Activated CD8-positive, alpha-beta T cell treated with anti-CD3 and anti-CD28 coated beads for 36 hours (primary cell): ENCODE measurements at regions of chr6 and their contacts with region 1.

Region 1: DNA sequence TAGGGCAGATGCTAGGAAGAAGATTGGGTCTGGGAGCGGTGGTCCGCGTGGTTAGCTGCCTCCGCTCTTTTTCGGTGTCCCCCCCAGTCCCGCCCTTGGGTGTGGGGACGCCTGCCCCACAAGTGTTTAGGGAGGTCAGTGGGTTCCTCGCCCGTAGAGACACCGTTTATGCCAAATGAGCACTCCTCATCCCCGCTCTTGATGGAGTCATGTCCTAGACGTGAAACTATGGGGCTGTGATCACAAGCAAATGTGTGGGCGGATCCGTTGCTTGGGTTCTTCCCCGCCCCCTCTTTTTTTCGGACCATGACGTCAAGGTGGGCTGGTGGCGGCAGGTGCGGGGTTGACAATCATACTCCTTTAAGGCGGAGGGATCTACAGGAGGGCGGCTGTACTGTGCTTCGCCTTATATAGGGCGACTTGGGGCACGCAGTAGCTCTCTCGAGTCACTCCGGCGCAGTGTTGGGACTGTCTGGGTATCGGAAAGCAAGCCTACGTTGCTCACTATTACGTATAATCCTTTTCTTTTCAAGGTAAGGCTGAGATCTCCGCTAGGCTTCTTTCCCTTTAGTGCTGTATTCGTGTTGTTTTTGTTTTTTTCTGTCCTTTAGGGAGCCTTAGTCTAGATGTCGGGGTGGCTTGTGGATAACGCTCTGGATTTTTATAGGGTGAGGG is at the start of gene HSP90AB1:
- DNase-seq: peak; percentile 99
- ATAC-seq: peak; percentile 85
- H3K4me3 Mint-ChIP-seq: peak within 1 kb of the TSS; percentile 100
- H3K27ac Mint-ChIP-seq: peak within 1 kb of the TSS; percentile 100
- H3K4me1 Mint-ChIP-seq: peaks cover 39% of the 10 kb centered on the region
- H3K27me3 Mint-ChIP-seq: peaks cover 3% of the 10 kb centered on the region
- CTCF ChIP-seq: no peak
- total RNA-seq, gene HSP90AB1: 2,124 to 2,130 TPM

Region 2: DNA sequence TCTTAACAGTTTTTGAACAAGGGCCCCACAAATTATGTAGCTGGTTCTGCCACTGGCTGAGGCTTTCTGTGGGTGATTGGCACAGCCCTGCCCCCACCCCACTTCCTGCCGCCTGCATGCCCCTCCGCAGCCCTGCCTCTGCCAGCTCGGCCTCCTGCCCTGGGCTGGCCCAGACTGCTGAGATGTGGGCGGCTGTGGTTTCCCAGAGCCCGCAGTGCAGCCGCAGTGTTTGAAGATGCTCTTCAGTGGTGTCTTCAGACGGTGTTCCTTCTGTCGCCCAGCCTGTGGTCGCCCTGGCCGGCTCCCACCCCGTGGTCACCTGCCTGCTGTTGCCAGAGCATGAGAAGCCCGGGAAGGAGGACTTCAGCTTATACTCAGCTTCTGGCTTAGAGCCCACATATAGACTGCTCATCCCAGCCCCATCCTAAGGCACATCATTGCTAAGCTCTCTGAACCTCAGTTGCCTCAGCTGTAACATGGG is 322.5 kb before region 1 on chr6:
- CTCF ChIA-PET with region 1: no interaction called
- POLR2A ChIA-PET with region 1: no interaction called
- intact Hi-C with region 1: no loop called
- DNase-seq: peak; percentile 84
- ATAC-seq: peak; percentile 90
- H3K4me3 Mint-ChIP-seq: no peak overlapping the region
- H3K27ac Mint-ChIP-seq: peak overlapping the region; percentile 25
- H3K4me1 Mint-ChIP-seq: peaks cover 40% of the 10 kb centered on the region
- H3K27me3 Mint-ChIP-seq: no peaks in the 10 kb centered on the region
- CTCF ChIP-seq: no peak

Region 3: DNA sequence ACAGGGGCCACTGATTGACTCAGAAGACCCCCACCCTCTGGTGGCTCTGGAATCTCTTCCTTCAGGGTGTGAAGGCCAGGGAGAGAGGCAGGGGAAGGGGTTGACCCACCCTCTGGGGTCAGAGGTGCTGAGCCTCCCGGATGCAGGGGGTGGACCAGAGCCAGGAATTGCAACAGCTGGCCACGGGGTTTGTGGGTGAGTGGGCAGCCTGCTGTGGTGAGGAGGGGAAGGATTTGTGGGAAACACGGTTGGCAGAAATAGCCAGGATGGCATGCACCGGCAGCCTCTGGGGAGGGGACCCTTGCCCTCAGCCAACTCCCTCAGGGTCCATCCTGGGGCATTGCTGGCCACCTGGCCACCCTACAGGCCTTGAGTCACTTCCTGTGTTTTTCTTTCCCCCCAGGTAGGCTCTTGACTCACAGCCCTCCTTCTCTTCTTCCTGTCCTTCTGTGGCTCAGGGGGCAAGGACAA is 212.4 kb before region 1 on chr6:
- CTCF ChIA-PET with region 1: no interaction called
- POLR2A ChIA-PET with region 1: no interaction called
- intact Hi-C with region 1: no loop called
- DNase-seq: no peak
- ATAC-seq: no peak
- H3K4me3 Mint-ChIP-seq: no peak overlapping the region
- H3K27ac Mint-ChIP-seq: no peak overlapping the region
- H3K4me1 Mint-ChIP-seq: no peaks in the 10 kb centered on the region
- H3K27me3 Mint-ChIP-seq: peaks cover 8% of the 10 kb centered on the region
- CTCF ChIP-seq: no peak

Region 4: DNA sequence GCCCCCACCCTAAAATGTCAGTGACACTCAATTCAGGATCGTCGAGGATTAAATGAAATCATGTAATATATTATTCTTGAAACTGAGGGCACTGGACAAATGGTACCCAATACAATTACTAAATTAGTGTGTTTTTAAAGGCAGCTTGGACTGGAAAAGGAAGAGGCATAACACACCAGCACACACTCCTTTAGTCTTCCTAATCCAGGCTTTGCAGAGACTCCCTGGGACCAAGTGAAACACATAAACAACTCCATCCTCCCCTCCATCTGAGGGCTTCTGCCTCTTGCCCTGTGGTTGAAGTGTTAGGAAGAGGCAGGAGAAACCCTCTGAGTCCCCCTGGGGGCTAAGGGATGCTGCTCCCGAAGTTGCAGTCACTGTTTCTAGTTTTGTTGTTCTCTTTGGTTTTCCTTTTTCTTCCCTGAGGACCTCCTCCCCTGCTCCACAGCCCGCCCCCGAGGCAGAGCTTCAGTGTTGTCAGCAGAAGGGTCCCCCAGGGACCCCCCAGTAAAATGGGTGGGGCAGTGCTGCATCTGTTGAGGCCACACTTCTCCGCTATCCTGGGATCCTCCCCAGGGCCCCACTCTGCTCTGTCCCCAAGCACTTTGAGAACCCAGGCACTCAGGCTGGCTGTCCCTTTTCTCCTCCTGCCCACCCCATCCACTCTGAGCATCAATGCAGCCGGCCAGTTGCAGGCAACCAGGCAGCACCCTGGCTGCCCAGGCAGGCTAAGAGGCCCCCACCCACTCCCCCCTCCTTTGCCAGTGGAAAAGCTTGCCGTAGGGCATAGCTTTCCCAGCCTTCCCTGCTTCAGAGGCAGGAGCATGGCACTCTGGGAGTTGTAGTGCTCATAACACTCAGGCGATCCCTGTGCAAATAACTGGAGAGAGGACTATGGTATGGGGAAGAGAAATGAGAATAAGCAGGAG is 113.5 kb before region 1 on chr6:
- CTCF ChIA-PET with region 1: no interaction called
- POLR2A ChIA-PET with region 1: interaction called, 13 read pairs
- intact Hi-C with region 1: no loop called
- DNase-seq: no peak
- ATAC-seq: no peak
- H3K4me3 Mint-ChIP-seq: no peak overlapping the region
- H3K27ac Mint-ChIP-seq: no peak overlapping the region
- H3K4me1 Mint-ChIP-seq: peaks cover 5% of the 10 kb centered on the region
- H3K27me3 Mint-ChIP-seq: no peaks in the 10 kb centered on the region
- CTCF ChIP-seq: no peak

Region 5: DNA sequence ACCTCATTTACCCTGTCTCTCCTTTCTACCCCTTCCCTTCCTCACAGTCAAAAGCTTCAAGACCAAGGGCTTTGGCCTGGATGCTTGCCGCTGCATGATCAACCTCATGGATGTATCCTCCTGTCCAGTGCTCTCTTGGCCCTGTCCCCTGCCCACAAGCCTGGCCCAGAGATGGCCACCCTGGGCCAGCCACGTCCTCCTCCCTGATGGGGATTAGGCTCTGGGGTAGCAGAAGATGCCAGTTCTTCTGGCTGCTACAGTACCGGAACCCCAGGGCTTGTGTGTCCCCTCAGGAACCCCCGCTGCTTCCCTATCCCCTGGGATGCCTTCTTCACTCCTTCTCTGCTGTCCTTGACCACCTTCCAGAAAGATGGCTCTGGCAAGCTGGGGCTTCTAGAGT is 65.9 kb before region 1 on chr6:
- CTCF ChIA-PET with region 1: no interaction called
- POLR2A ChIA-PET with region 1: interaction called, 17 read pairs
- intact Hi-C with region 1: no loop called
- DNase-seq: no peak
- ATAC-seq: no peak
- H3K4me3 Mint-ChIP-seq: no peak overlapping the region
- H3K27ac Mint-ChIP-seq: no peak overlapping the region
- H3K4me1 Mint-ChIP-seq: peaks cover 17% of the 10 kb centered on the region
- H3K27me3 Mint-ChIP-seq: no peaks in the 10 kb centered on the region
- CTCF ChIP-seq: no peak

Region 6: GRCh38 chr6:44221291-44221960 is 25.4 kb before region 1 on chr6:
- CTCF ChIA-PET with region 1: interaction called, 12 read pairs
- POLR2A ChIA-PET with region 1: interaction called, 131 read pairs
- intact Hi-C with region 1: no loop called
- DNase-seq: peak; percentile 87
- ATAC-seq: peak; percentile 69
- H3K4me3 Mint-ChIP-seq: no peak overlapping the region
- H3K27ac Mint-ChIP-seq: no peak overlapping the region
- H3K4me1 Mint-ChIP-seq: peaks cover 52% of the 10 kb centered on the region
- H3K27me3 Mint-ChIP-seq: peaks cover 6% of the 10 kb centered on the region
- CTCF ChIP-seq: peak; percentile 81

Region 7: GRCh38 chr6:44257025-44257752 is 10.4 kb after region 1 on chr6 and contains the start of gene SLC35B2:
- CTCF ChIA-PET with region 1: interaction called, 47 read pairs
- POLR2A ChIA-PET with region 1: interaction called, 486 read pairs
- intact Hi-C with region 1: no loop called
- DNase-seq: peak; percentile 72
- ATAC-seq: peak; percentile 68
- H3K4me3 Mint-ChIP-seq: peak within 1 kb of the TSS; percentile 85
- H3K27ac Mint-ChIP-seq: peak within 1 kb of the TSS; percentile 85
- H3K4me1 Mint-ChIP-seq: peaks cover 66% of the 10 kb centered on the region
- H3K27me3 Mint-ChIP-seq: no peaks in the 10 kb centered on the region
- CTCF ChIP-seq: peak; percentile 77
- total RNA-seq, gene SLC35B2: 15.4 to 16.7 TPM